ENCODE measurements at regions of chrX and their contacts with region 1.

Region 1: DNA sequence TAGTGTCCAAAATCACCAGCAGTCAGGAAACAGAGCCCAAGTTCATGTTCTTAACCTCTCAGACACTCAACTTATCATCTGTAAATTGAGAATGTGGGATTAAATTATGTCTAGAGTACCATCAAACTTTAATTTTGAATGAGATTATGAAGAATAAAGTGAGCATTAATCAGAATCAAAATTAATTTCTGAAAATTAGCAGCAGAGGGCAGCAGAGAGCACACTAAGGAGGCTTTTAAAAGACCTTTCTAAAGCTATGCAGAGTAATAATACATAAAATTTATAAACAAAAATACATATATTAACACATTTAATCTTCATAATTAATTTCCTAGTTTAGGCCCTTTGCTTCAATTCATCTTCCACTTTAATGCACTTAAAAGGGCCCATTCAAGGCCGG is 7.1 kb downstream of the TASL start:
- DNase-seq: no peak
- ATAC-seq: no peak
- H3K4me3 Mint-ChIP-seq: no peak overlapping the region
- H3K27ac Mint-ChIP-seq: no peak overlapping the region
- H3K4me1 Mint-ChIP-seq: peaks cover 57% of the 10 kb centered on the region
- H3K27me3 Mint-ChIP-seq: no peaks in the 10 kb centered on the region
- CTCF ChIP-seq: no peak

Region 2: GRCh38 chrX:30530606-30531005 is 39.9 kb before region 1 on chrX:
- CTCF ChIA-PET with region 1: no interaction called
- POLR2A ChIA-PET with region 1: no interaction called
- intact Hi-C with region 1: no loop called
- DNase-seq: no peak
- ATAC-seq: no peak
- H3K4me3 Mint-ChIP-seq: no peak overlapping the region
- H3K27ac Mint-ChIP-seq: no peak overlapping the region
- H3K4me1 Mint-ChIP-seq: no peaks in the 10 kb centered on the region
- H3K27me3 Mint-ChIP-seq: no peaks in the 10 kb centered on the region
- CTCF ChIP-seq: no peak

Region 3: GRCh38 chrX:30618156-30618765 is 47.8 kb after region 1 on chrX:
- CTCF ChIA-PET with region 1: interaction called, 4 read pairs
- POLR2A ChIA-PET with region 1: interaction called, 3 read pairs
- intact Hi-C with region 1: loop called (anchors 1 kb)
- DNase-seq: no peak
- ATAC-seq: no peak
- H3K4me3 Mint-ChIP-seq: no peak overlapping the region
- H3K27ac Mint-ChIP-seq: no peak overlapping the region
- H3K4me1 Mint-ChIP-seq: no peaks in the 10 kb centered on the region
- H3K27me3 Mint-ChIP-seq: no peaks in the 10 kb centered on the region
- CTCF ChIP-seq: no peak

Region 4: GRCh38 chrX:30713061-30713525 is 142.6 kb after region 1 on chrX:
- CTCF ChIA-PET with region 1: no interaction called
- POLR2A ChIA-PET with region 1: interaction called, 6 read pairs
- intact Hi-C with region 1: loop called (anchors 1 kb)
- DNase-seq: no peak
- ATAC-seq: peak; percentile 64
- H3K4me3 Mint-ChIP-seq: no peak overlapping the region
- H3K27ac Mint-ChIP-seq: peak overlapping the region; percentile 57
- H3K4me1 Mint-ChIP-seq: peaks cover 7% of the 10 kb centered on the region
- H3K27me3 Mint-ChIP-seq: no peaks in the 10 kb centered on the region
- CTCF ChIP-seq: no peak

Measured in activated B cell treated with CpG ODN at 0.5 μM for 24 hours (primary cell).